Calu3 (cell line): ENCODE measurements at regions of chr1 and their contacts with region 1.

Region 1: GRCh38 chr1:179129702-179130473 is 48.0 kb downstream of the TOR3A start:
- DNase-seq: no peak
- H3K4me3 Mint-ChIP-seq: peak overlapping the region; percentile 51
- H3K27ac Mint-ChIP-seq: peak overlapping the region; percentile 91
- H3K4me1 Mint-ChIP-seq: peaks cover 89% of the 10 kb centered on the region
- H3K27me3 Mint-ChIP-seq: no peaks in the 10 kb centered on the region
- CTCF ChIP-seq: no peak

Region 2: GRCh38 chr1:179164494-179164893 is 34.6 kb after region 1 on chr1:
- CTCF ChIA-PET with region 1: no interaction called
- intact Hi-C with region 1: loop called (anchors 2 kb)
- DNase-seq: no peak
- H3K4me3 Mint-ChIP-seq: no peak overlapping the region
- H3K27ac Mint-ChIP-seq: no peak overlapping the region
- H3K4me1 Mint-ChIP-seq: peaks cover 53% of the 10 kb centered on the region
- H3K27me3 Mint-ChIP-seq: no peaks in the 10 kb centered on the region
- CTCF ChIP-seq: no peak